Upper lobe of right lung (tissue), 1 donor: ENCODE measurements at regions of chr4 and their contacts with region 1.

Region 1: DNA sequence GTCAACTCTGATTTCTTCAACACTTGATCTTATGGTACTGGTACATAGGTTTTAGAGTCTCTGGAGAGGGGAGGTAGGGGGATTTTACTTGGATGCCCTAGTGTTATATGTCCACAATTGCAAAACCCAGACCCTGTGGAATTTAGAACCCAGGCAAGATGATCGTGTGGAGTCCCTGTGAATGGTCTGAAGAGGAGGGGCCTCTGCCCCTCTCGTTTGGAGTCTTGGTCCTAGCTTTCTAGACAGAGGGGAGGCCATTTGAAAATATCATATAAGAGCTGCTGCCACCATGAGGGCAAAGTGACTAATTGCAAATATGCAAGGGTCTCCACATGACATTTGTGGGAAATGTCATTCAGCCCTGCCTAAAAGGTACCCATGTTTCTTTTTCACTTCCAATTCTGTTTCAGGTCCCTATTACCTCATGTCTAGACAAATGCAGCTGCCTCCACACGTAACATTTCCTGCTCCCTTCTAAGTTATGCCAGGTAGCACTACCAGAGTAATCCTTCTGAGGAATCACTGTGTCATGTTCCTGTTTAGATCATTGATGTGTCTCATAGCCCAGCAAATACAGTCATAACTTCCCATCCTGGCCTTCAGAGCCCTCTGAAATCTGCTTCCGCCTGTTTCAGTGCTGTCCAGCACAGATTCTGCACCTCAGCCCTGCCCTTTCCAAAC is 126.8 kb downstream of the KLHL8 start:
- DNase-seq: no peak
- ATAC-seq: peak; percentile 77
- H3K4me3 ChIP-seq: no peak overlapping the region
- H3K27ac ChIP-seq: peak overlapping the region; percentile 11
- H3K4me1 ChIP-seq: peaks cover 24% of the 10 kb centered on the region
- H3K27me3 ChIP-seq: no peaks in the 10 kb centered on the region
- CTCF ChIP-seq: peak; percentile 61

Region 2: GRCh38 chr4:86927843-86928395 is 165.7 kb before region 1 on chr4:
- intact Hi-C with region 1: loop called (anchors 5 kb)
- DNase-seq: no peak
- ATAC-seq: peak; percentile 57
- H3K4me3 ChIP-seq: no peak overlapping the region
- H3K27ac ChIP-seq: no peak overlapping the region
- H3K4me1 ChIP-seq: no peaks in the 10 kb centered on the region
- H3K27me3 ChIP-seq: no peaks in the 10 kb centered on the region
- CTCF ChIP-seq: no peak